ENCODE measurements at regions of chr20 and their contacts with region 1.

Region 1: GRCh38 chr20:45629496-45630100 is at the start of gene WFDC10A:
- DNase-seq: no peak
- H3K4me3 ChIP-seq: no peak within 1 kb of the TSS
- H3K27me3 ChIP-seq: no peaks in the 10 kb centered on the region; the same call in 1 of the 2 replicates
- CTCF ChIP-seq: peak; percentile 79
- polyA plus RNA-seq, gene WFDC10A: not detected in 2 replicates

Region 2: DNA sequence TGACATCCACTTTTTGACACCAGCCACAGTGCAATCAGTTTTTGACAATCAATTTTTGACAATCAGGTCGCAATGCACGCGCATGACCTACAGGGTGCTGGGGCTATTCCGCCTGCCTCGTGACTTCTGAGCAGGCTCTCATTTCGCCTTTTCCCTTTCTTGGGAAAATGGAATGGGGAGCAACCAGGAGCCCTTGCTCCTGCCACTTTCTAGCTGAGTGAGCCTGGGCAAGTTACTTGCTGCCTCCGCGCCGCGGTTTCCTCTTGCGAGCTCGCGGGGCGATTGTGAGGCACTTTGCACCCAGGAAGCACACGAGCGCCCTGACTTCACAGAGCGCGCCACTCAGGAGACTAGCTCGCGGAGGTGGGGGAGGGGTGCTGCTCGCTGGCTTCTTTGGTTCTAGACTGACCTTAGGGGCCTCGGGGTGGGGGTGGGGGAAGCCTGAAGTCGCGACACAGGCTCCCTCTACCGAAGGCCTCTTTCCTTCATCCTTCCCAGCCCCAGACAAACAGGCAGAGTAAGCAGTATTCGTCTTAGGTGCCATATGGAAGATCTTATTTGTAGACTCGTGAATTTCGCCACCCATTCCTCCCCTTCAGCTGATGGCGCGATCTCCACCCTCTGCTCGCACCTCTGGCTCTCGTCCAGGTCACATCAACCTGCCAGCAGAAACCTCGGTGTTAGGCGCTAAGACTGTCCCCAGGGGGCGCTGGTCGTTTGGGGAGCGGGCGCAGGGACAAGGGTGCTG is 256.1 kb before region 1 on chr20:
- CTCF ChIA-PET with region 1: no interaction called
- POLR2A ChIA-PET with region 1: no interaction called
- DNase-seq: no peak
- H3K4me3 ChIP-seq: peak overlapping the region; percentile 33
- H3K27me3 ChIP-seq: no peaks in the 10 kb centered on the region
- CTCF ChIP-seq: peak; percentile 94

Region 3: GRCh38 chr20:45611054-45611453 is 18.5 kb before region 1 on chr20:
- CTCF ChIA-PET with region 1: interaction called, 10 read pairs
- POLR2A ChIA-PET with region 1: no interaction called
- DNase-seq: peak; percentile 48
- H3K4me3 ChIP-seq: no peak overlapping the region
- H3K27me3 ChIP-seq: no peaks in the 10 kb centered on the region
- CTCF ChIP-seq: no peak

Region 4: GRCh38 chr20:45617591-45617990 is 12.0 kb before region 1 on chr20:
- CTCF ChIA-PET with region 1: interaction called, 13 read pairs
- POLR2A ChIA-PET with region 1: no interaction called
- DNase-seq: no peak
- H3K4me3 ChIP-seq: no peak overlapping the region
- H3K27me3 ChIP-seq: no peaks in the 10 kb centered on the region
- CTCF ChIP-seq: no peak